ENCODE measurements at regions of chr15 and their contacts with region 1.

Region 1: GRCh38 chr15:85044251-85044853 is 62.7 kb downstream of the PDE8A start:
- DNase-seq: no peak

Region 2: DNA sequence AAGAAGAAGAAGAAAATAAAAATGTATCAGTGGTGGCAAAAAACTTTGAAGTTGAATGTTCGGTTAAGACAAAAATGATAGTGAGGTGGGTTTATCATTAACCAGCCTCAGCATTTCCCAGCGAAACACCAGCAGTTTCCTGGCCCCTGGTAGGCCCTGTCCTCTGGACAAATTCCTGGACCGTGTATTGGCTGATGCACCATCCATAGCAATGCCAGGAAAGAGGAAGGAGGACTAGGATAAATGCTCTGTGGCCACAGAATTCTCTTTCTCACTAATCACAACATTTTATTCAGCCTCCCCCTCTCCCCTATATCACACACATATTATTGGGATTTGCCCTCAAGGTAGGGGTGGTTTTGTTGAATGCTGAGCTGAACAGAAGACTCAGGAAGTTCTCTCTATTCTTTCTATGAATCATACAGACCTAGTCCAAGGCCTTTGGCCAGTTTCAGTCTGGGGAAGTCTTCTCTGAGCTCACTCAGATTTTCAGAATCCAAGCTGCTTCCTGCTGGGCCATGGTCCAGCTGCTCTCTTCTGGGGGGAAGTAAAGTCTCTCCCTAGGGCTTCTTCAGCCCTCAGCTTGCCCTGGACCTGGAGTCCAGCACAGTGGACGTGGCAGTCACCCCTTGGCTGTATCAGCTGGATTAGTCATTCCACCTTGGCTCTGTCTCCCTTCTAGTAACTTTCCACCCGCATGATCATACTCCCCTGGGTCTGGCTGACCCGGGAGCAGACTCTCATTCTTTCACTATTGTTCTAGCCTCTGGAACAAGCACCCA is 132.3 kb before region 1 on chr15:
- intact Hi-C with region 1: no loop called
- DNase-seq: peak; percentile 97

Region 3: GRCh38 chr15:84949845-84950569 is 94.3 kb before region 1 on chr15:
- intact Hi-C with region 1: loop called (anchors 5 to 10 kb)
- DNase-seq: peak; percentile 29

Region 4: DNA sequence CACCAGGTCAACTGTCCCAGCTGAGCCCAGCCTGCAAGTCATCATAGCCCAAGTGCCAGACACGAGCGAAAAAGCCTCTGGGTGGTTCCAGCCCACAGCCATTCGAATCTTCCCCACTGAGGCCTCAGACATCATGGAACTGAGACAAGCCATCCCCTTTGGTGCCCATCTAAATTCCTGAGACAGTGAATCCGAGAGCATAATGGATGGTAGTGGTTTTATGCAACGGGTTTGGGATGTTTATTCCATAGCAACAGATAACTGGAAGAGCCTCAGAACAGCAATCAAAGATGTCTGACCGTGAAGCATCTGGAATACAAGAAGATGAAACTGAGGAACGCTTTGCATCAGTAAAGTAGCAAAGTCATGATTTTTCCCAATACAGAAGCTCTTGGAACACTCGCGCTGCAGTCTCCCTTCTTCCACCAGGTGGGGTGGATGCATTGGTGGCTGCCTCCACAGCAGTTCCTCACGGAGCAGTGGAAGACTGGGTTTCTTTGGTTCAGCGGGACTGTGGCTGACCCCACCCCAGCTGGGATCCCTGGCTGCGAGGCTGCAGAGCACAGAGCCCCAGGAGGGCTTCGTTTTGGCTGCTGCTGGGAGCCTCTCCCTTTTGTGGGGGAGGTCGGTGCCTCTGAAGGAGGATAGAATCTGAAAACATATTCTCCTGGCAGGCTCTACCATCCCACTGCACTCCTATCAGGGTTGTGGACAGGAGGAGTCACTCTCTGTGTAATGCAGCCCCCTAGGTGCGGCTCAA is 89.1 kb before region 1 on chr15:
- intact Hi-C with region 1: loop called (anchors 5 to 10 kb)
- DNase-seq: peak; percentile 91

Region 5: DNA sequence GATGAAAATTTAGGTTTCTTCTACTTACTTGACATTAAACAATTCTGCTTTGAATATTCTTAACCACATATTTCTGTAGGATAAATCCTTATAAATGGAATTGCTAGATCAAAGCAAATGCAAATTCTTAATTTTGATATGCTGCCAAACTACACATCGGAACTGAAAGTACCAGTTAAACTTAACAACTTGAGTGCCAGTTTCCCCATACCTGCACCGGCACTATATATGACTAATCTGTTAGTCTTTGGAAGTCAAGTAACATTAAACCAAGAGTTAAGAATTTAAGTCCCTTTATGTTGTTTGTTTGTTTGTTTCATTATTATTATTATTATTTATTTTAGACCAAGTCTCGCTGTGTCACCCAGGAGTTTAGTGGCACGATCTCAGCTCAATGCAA is 232.2 kb after region 1 on chr15:
- intact Hi-C with region 1: no loop called
- DNase-seq: no peak

Measured in posterior vena cava (tissue), 2 donors.